ENCODE measurements at regions of chr22 and their contacts with region 1.

Region 1: GRCh38 chr22:46563381-46564083 is 26.1 kb upstream of the CELSR1 start:
- DNase-seq: peak; percentile 85
- H3K4me3 ChIP-seq: no peak overlapping the region; a peak in 1 of 4 replicates
- H3K27ac ChIP-seq: 0 out of 4 replicates have a peak overlapping the region, but pooled peaks of 1 of the 2 experiments have one; percentile 8
- H3K4me1 ChIP-seq: peaks cover 0 to 12% of the 10 kb centered on the region in 2 experiments; a peak in 1 of 4 replicates
- H3K27me3 ChIP-seq: no peaks in the 10 kb centered on the region
- CTCF ChIP-seq: peak; percentile 70
- EP300 ChIP-seq: no peak
- RAD21 ChIP-seq: peak; percentile 84

Region 2: GRCh38 chr22:46355371-46355995 is 208.0 kb before region 1 on chr22:
- CTCF ChIA-PET with region 1: interaction called, 10 read pairs
- POLR2A ChIA-PET with region 1: no interaction called
- DNase-seq: peak; percentile 92
- H3K4me3 ChIP-seq: no peak overlapping the region; a peak in 1 of 4 replicates
- H3K27ac ChIP-seq: no peak overlapping the region
- H3K4me1 ChIP-seq: no peaks in the 10 kb centered on the region
- H3K27me3 ChIP-seq: no peaks in the 10 kb centered on the region
- CTCF ChIP-seq: peak; percentile 78
- EP300 ChIP-seq: no peak
- RAD21 ChIP-seq: peak; percentile 81

Region 3: DNA sequence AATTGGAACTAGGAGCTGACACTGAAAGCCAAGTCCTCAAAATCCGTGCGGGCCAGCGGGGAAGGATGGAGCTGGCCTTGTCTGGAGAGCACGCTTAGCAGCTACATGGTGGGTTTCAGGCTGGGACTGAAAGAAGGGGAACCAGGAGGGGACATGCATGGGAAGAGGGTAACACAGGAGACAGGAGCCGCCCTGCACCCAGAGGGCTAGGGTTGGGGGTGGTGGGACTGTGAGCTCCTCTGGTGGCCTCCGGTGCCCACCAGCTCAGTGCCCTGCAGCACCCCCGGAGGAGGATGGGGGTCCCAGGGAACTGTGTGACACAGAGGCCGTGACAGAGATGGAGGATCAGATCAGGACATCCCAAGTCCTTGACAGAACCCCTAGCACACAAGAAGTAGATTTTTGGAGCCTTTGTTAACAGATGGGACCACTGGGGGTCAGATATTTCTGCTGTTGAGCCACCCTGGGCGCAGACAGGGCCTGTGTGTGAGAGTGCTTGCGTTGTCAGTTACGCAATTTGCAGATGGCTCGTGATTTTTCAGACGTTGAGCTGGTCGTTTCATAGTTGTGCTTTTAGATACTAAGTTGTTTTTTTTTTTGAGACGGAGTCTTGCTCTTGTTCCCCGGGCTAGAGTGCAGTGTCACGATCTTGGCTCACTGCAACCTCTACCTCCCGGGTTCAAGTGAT is 35.3 kb after region 1 on chr22:
- CTCF ChIA-PET with region 1: interaction called, 11 read pairs
- POLR2A ChIA-PET with region 1: no interaction called
- DNase-seq: no peak
- H3K4me3 ChIP-seq: no peak overlapping the region
- H3K27ac ChIP-seq: no peak overlapping the region
- H3K4me1 ChIP-seq: peaks cover 0 to 30% of the 10 kb centered on the region in 2 experiments; a peak in 1 of 4 replicates
- H3K27me3 ChIP-seq: no peaks in the 10 kb centered on the region
- CTCF ChIP-seq: no peak
- EP300 ChIP-seq: no peak
- RAD21 ChIP-seq: no peak

Region 4: DNA sequence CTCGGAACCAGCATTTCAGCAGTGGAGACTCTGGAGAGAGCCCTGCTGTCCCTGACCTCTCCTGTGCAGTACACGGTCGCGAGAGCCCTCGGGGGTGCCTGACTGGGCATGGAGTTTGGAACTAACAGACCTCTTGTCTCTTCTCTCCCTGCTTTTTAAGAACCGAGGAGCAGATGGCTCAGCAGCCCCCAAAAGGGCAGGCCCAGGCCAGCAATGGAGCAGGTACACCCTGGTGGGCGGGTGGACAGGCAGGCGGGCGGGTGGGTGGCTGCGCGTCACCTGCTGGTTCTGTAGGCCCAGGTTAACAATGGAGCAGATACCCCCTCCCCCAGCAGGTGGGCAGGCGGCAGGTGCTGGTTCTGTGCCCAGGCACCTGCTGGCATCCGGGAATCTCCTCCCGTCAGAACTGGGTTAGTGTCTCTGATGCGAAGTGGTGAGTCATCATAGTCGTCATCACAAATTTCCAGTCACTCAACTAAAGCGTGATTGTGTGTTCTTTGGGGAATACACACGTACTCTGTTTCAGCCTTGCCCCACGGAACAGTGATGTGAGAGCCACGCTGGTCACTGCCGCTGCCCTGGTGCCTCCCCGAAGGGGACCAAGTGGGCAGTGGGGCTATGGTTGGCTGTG is 97.8 kb after region 1 on chr22:
- CTCF ChIA-PET with region 1: interaction called, 20 read pairs
- POLR2A ChIA-PET with region 1: no interaction called
- DNase-seq: peak; percentile 77
- H3K4me3 ChIP-seq: no peak overlapping the region
- H3K27ac ChIP-seq: peak overlapping the region in 1 of 2 experiments; percentile 86; a peak in 2 of 4 replicates
- H3K4me1 ChIP-seq: peaks cover 0 to 53% of the 10 kb centered on the region in 2 experiments; a peak in 2 of 4 replicates
- H3K27me3 ChIP-seq: no peaks in the 10 kb centered on the region
- CTCF ChIP-seq: no peak
- EP300 ChIP-seq: no peak
- RAD21 ChIP-seq: no peak

Region 5: DNA sequence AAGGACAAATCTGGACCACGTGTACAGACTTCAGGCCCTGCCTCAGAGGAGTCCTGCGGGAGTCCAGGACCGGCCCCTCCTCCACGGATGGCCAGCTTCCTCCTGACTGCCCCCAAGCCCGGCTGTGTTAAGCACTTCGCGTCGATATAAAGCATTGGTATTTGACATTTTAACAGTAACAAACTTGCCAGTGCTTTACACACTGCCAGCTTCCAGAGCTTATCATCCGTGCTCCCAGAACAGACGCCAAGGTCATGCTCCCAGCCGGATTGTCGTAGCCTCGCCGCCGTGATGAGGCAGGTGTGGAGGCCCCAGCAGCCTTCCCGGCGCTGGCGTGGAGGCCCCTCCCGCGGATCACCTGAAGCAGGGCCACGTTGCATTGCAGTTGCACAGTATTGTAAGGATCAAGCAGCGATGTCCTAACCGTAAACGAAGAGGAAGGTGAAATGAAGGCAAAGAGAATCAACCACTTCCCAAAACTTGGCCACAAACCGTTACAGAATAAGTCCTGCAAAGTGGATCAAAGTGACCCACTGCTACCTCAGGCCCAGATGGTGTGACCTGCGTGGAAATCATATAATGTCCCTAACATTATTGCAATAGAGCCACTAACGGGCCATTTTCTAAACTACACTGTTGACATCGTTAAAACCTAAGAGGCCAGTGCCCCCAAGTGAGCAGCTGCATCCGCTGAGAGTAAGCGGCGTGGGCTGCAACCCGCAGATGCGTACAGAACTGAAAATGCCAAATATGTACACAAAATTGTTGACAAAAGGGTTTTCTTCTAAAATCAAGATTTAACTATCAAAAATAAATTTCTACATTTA is 122.9 kb after region 1 on chr22:
- CTCF ChIA-PET with region 1: interaction called, 17 read pairs
- POLR2A ChIA-PET with region 1: no interaction called
- DNase-seq: no peak
- H3K4me3 ChIP-seq: no peak overlapping the region
- H3K27ac ChIP-seq: no peak overlapping the region
- H3K4me1 ChIP-seq: no peaks in the 10 kb centered on the region; a peak in 1 of 4 replicates
- H3K27me3 ChIP-seq: no peaks in the 10 kb centered on the region
- CTCF ChIP-seq: no peak
- EP300 ChIP-seq: no peak
- RAD21 ChIP-seq: no peak

Region 6: DNA sequence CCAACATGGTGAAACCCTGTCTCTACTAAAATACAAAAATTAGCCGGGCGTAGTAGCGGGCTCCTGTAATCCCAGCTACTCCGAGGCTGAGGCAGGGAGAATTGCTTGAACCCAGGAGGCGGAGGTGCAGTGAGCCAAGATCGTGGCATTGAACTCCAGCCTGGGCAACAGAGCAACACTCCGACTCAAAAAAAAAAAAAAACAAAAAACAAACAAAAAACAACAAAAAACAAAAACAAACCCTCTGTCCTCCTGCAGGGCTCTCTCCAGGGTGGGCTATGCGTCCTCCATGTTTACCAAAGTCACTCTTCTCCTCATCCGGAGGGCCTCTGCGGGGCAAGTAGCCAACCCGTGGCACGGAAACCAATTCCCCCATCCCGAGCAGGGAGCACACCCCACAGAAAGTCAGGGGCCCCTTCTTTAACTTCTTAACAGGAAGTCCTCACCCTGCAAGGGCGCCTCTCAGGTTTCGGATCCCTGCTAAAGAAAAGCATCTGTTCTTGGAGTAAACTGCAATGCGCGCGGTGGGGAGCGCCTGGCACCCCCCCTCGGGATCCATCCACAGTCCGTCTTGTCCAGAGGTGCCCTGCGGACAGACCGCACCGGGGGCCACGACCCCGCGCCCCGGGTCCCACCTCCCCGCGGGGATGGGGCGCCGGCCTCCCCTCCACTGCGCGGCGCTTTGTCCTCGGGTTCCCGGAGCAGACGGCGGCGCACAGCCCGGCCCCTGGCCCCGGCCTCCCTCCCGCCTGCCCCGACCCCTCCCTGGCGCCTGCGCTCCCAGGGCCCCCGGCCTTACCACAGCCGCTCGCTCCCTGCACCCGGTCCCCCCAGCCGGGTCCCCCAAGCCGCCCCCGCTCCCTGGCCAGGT is 173.8 kb after region 1 on chr22:
- CTCF ChIA-PET with region 1: interaction called, 20 read pairs
- POLR2A ChIA-PET with region 1: no interaction called
- DNase-seq: no peak
- H3K4me3 ChIP-seq: peak overlapping the region; percentile 67 to 96
- H3K27ac ChIP-seq: peak overlapping the region; percentile 42 to 90; a peak in 3 of 4 replicates
- H3K4me1 ChIP-seq: peaks cover 22 to 66% of the 10 kb centered on the region in 2 experiments
- H3K27me3 ChIP-seq: no peaks in the 10 kb centered on the region
- CTCF ChIP-seq: no peak
- EP300 ChIP-seq: no peak
- RAD21 ChIP-seq: no peak

Measured in SK-N-SH (cell line).